CD4-positive, alpha-beta memory T cell (primary cell): ENCODE measurements at regions of chr1 and their contacts with region 1.

Region 1: GRCh38 chr1:160058087-160058486 is 11.9 kb downstream of the KCNJ10 start:
- DNase-seq: no peak
- H3K4me3 ChIP-seq: no peak overlapping the region
- H3K4me3 Mint-ChIP-seq: no peak overlapping the region
- H3K27ac ChIP-seq: no peak overlapping the region
- H3K27ac Mint-ChIP-seq: no peak overlapping the region
- H3K4me1 ChIP-seq: no peaks in the 10 kb centered on the region
- H3K4me1 Mint-ChIP-seq: no peaks in the 10 kb centered on the region
- H3K27me3 ChIP-seq: peaks cover 6% of the 10 kb centered on the region
- H3K27me3 Mint-ChIP-seq: peaks cover 22 to 34% of the 10 kb centered on the region in 2 donors

Region 2: DNA sequence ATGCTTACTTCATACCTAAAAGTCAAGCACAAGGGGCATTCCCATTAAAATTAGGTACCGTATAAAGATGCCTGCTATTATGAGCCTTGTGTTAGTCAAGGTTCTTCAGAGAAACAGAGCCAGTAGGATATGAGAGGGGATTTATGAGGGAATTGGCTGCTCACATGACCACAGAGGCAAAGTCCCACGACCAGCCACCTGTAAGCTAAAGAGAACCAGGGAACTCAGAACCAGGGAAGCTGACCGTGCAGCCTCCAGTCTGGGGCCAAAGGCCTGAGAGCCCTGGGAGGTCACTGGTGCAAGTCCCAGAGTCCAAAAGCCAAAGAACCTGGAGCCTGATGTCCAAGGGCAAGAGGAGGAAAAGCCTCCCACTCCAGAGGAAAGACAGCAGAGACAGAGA is 46.3 kb before region 1 on chr1:
- CTCF ChIA-PET with region 1: no interaction called
- POLR2A ChIA-PET with region 1: no interaction called
- intact Hi-C with region 1: no loop called
- DNase-seq: no peak
- H3K4me3 ChIP-seq: no peak overlapping the region
- H3K4me3 Mint-ChIP-seq: no peak overlapping the region
- H3K27ac ChIP-seq: no peak overlapping the region
- H3K27ac Mint-ChIP-seq: no peak overlapping the region
- H3K4me1 ChIP-seq: no peaks in the 10 kb centered on the region
- H3K4me1 Mint-ChIP-seq: no peaks in the 10 kb centered on the region
- H3K27me3 ChIP-seq: no peaks in the 10 kb centered on the region
- H3K27me3 Mint-ChIP-seq: peaks cover 1% of the 10 kb centered on the region in 2 donors

Region 3: DNA sequence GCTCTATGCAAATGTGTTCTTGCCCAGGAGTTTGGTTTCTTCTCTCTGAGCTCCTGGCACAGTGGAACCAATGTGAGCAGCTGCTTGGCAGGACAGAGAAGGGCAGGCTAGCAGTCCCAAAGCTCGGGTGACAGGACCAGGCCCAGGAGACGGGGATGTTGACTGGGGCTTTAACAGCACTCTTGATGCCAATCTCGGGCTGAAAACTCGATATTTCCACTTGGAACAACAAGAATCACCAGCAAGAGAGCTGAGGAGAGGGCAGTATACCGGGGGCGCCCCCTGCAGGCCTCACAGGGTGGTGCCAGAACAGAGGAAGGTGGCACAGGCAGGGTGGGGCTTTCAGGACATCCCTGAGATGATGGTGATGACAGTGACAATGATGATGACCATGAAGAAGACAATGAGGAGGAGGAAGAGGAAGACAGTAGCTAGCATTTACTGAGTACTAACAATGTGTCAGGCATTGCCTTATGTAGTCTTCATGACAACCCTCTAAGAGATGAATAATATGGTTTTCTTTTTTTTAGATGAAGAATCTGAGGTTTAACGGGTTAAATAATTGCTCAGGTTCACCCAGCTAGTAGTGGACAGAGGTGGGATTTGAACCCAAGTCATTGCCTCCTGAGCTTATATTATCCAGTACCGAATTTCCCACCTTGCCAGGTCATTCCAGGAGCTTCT is 20.6 kb after region 1 on chr1:
- CTCF ChIA-PET with region 1: interaction called, 14 read pairs
- POLR2A ChIA-PET with region 1: no interaction called
- intact Hi-C with region 1: no loop called
- DNase-seq: peak; percentile 45 to 57 (median 54)
- H3K4me3 ChIP-seq: no peak overlapping the region
- H3K4me3 Mint-ChIP-seq: no peak overlapping the region
- H3K27ac ChIP-seq: no peak overlapping the region
- H3K27ac Mint-ChIP-seq: no peak overlapping the region
- H3K4me1 ChIP-seq: no peaks in the 10 kb centered on the region
- H3K4me1 Mint-ChIP-seq: peaks cover 0 to 12% (median 4%) of the 10 kb centered on the region in 4 donors
- H3K27me3 ChIP-seq: peaks cover 38% of the 10 kb centered on the region
- H3K27me3 Mint-ChIP-seq: peaks cover 51 to 60% of the 10 kb centered on the region in 2 donors

Region 4: GRCh38 chr1:160124705-160125478 is 66.8 kb after region 1 on chr1:
- CTCF ChIA-PET with region 1: no interaction called
- POLR2A ChIA-PET with region 1: no interaction called
- intact Hi-C with region 1: no loop called
- DNase-seq: no peak
- H3K4me3 ChIP-seq: no peak overlapping the region
- H3K4me3 Mint-ChIP-seq: no peak overlapping the region
- H3K27ac ChIP-seq: no peak overlapping the region
- H3K27ac Mint-ChIP-seq: no peak overlapping the region
- H3K4me1 ChIP-seq: no peaks in the 10 kb centered on the region
- H3K4me1 Mint-ChIP-seq: no peaks in the 10 kb centered on the region
- H3K27me3 ChIP-seq: no peaks in the 10 kb centered on the region
- H3K27me3 Mint-ChIP-seq: peaks cover 3 to 6% of the 10 kb centered on the region in 2 donors